ENCODE measurements at regions of chr5 and their contacts with region 1.

Region 1: DNA sequence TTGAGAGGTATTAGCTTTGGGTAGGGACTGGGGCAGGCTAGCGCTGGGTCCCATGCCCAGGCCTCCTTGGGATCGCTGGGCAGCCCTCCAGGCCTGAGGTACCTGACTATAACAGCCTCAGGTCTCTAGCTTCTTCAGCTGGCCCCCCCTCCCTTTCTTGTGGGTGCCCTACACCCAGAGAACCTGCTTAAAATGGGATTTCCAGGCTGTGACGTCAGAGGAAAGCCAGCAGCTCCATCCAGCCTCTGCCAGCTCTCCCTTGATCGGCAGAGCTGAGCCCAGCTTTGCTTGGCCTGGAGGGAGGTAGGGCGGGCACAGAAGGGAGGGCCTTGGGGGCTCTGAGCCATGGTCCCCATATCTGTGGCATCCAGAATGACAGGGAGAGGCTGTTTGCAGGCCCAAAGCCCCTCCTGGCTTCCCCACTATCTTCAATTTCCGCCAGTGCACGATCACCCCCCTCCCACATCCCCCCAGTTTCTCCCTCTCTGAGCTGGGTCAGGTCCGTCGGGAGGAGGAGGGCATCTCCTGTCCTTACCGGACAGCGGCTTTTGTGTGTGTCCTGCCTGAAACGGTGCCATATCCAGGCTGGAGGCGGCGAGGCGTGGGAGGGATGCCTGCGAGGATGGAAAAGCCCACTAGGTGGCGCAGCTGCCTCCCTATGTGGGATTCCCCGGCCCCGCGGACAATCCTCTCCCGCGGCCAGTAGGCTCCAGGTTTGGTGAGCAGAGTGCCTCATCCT is 10.8 kb downstream of the REEP2 start:
- DNase-seq: peak; percentile 93
- ATAC-seq: peak; percentile 94 to 97
- H3K4me3 ChIP-seq: no peak overlapping the region
- H3K27ac ChIP-seq: no peak overlapping the region
- H3K4me1 ChIP-seq: peaks cover 7% of the 10 kb centered on the region
- H3K27me3 ChIP-seq: no peaks in the 10 kb centered on the region
- CTCF ChIP-seq: peak; percentile 96

Region 2: GRCh38 chr5:138264183-138264582 is 185.5 kb before region 1 on chr5:
- intact Hi-C with region 1: no loop called
- DNase-seq: no peak
- ATAC-seq: no peak
- H3K4me3 ChIP-seq: no peak overlapping the region
- H3K27ac ChIP-seq: no peak overlapping the region
- H3K4me1 ChIP-seq: no peaks in the 10 kb centered on the region
- H3K27me3 ChIP-seq: no peaks in the 10 kb centered on the region
- CTCF ChIP-seq: no peak

Region 3: DNA sequence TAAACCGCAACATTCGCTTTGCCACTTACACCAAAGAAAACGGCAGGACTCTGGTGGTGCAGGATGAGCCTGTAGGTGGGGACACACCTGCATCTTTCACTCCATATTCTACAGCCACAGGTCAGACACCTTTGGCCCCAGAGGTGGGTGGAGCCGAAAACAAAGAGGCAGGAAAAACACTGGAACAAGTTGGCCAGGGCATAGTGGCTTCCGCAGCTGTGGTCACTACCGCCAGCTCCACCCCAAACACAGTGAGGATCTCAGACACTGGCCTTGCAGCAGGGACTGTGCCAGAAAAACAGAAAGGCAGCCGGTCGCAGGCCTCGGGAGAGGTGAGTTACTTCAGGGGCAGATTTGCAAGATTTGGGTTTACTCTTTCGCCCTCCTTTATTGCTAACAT is 63.4 kb before region 1 on chr5:
- intact Hi-C with region 1: no loop called
- DNase-seq: no peak
- ATAC-seq: no peak
- H3K4me3 ChIP-seq: no peak overlapping the region
- H3K27ac ChIP-seq: no peak overlapping the region
- H3K4me1 ChIP-seq: no peaks in the 10 kb centered on the region
- H3K27me3 ChIP-seq: no peaks in the 10 kb centered on the region
- CTCF ChIP-seq: no peak

Region 4: GRCh38 chr5:138503487-138504270 is 54.0 kb after region 1 on chr5:
- intact Hi-C with region 1: loop called (anchors 10 kb)
- DNase-seq: no peak
- ATAC-seq: peak; percentile 82 to 83
- H3K4me3 ChIP-seq: no peak overlapping the region
- H3K27ac ChIP-seq: no peak overlapping the region
- H3K4me1 ChIP-seq: peaks cover 17% of the 10 kb centered on the region
- H3K27me3 ChIP-seq: no peaks in the 10 kb centered on the region
- CTCF ChIP-seq: peak; percentile 76

Region 5: DNA sequence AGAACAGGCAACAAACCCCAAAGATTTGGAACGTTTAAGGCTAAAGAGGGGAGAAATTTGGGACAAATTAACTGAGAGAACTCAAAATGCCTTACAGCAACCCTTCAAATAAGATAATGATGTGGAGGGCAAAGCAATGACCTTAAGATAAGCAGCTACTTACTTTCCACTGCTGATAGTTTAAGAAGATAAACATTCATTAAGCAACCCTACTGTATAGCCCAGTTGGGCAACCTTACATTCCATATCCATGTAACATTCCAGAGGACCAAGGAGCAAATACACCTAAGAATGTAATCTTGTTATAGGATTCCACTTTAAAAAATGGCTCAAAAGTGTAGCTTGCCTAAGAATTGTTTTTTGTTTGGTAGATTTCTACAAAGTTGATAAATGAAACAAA is 78.5 kb after region 1 on chr5:
- intact Hi-C with region 1: no loop called
- DNase-seq: no peak
- ATAC-seq: peak; percentile 82 to 87
- H3K4me3 ChIP-seq: no peak overlapping the region
- H3K27ac ChIP-seq: no peak overlapping the region
- H3K4me1 ChIP-seq: peaks cover 41% of the 10 kb centered on the region
- H3K27me3 ChIP-seq: no peaks in the 10 kb centered on the region
- CTCF ChIP-seq: no peak

Measured in lower lobe of right lung (tissue), 2 donors.